ENCODE measurements at regions of chr22 and their contacts with region 1.

Region 1: DNA sequence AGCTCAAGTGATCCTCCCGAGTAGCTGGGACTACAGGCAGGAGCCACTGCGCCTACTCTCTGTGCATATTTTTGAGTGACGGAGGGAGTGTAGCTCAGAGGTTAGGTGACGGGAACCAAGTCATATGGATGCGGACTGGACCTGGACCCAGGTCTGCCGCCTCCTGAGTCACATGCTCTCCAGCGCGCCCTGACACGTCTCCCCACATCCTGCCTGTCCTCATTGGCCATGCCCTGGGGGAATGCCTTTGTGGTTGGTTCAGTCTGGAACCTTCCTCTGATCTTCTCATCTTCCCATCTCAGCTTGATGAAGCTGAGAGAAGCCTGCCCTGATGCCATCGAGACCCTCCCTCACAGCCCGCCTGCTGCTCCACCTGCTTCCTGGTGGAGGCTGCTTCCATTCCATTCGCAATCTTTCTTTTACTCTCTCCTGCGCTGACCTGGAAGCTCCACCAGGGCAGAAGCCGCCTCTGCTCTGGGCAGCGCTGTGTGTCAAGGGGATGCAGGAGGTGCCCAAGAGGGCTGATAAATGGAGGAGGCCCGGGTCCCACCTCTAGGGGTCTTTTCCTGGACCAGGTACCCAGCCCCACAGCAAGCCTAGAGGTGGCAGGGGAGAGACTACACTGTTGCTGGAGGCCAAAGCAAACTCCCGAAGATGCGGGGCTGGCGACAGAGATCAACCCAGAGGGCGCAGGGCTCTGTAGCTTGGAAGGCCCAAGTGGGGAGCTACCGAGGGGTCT is 13.9 kb upstream of the BAIAP2L2 start:
- DNase-seq: no peak

Region 2: DNA sequence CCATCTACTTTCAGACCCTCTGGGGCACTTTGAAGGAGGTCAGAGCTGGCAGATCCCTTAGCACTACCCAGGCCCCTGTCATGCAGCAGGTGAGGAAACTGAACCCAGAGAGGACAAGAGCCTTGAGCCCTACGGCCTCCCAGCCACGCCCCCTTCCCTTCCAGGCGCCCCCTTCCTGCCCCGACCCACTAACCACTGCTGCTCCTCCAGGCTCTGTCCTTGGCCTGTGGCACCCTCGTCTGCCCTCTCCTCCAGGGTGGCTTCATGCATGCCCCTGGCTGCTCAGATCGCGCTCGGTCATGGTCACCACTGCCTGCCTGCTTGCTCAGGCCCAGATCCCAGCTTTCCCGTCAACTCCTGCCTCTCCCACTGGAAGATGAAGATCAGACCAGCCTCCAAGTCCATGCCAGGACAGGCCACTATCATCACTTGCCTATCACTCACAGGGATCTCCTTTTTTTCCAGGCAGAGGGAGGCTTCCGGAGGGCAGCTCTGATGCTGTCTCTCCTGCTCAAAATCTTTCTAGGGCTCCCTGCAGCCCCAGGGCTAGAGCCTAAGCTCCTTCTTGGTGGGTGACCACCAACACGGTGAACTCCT is 727.8 kb before region 1 on chr22:
- intact Hi-C with region 1: loop called in 1 of 2 experiments (anchors 5 kb)
- DNase-seq: no peak

Region 3: GRCh38 chr22:37972527-37972926 is 151.9 kb before region 1 on chr22:
- intact Hi-C with region 1: no loop called
- DNase-seq: no peak

Region 4: DNA sequence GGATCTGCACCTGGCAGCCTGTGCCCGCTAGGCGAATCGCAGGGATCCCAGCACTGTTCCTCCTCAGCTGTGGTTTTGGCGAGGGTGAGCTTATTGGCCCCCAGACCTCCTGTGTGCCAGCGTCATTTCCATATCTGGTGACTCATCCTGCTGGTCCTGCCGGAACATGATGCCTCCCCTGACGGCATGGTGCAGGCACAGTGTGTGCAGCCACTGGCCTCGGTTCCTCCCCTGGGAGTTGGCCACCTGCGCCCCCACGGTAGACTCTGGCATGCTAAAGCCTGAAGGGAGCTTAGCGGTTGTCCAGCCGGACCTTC is 124.5 kb before region 1 on chr22:
- intact Hi-C with region 1: no loop called
- DNase-seq: no peak

Region 5: GRCh38 chr22:38153821-38154562 is 29.6 kb after region 1 on chr22:
- intact Hi-C with region 1: loop called in 1 of 2 experiments (anchors 1 kb)
- DNase-seq: no peak